Left cardiac atrium (tissue), 4 donors: ENCODE measurements at regions of chr16 and their contacts with region 1.

Region 1: GRCh38 chr16:70746708-70747424 is 54.1 kb downstream of the VAC14 start:
- DNase-seq: peak; percentile 79
- ATAC-seq: peak; percentile 67 to 79

Region 2: DNA sequence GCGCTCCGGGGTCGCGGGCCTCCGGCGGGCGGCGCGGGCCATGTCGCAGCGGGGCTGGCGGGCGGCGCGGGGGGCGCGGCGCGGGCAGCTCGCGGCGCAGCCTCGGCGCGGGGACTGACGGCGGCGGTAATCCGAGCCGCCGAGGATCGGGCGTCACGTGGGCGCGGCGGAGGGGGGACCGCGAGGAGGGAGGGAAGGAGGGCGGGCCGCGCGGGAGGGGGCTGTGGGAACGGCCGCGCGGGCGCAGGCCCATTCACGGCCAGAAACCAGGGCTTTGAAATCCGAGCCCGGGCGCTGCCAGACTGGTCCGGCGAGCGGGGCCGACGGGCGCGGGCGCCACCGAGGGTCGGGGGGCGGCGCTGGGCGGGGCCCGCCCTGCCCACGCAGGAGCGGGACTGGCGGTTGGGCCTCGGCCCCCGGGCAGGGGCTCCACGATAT is 60.9 kb before region 1 on chr16 and contains the start of gene MTSS2:
- intact Hi-C with region 1: loop called in 1 of 2 experiments (anchors 10 kb)
- DNase-seq: peak; percentile 84
- ATAC-seq: peak; percentile 65 to 72
- total RNA-seq, gene MTSS2: 50.7 to 51.4 TPM